ENCODE measurements at regions of chr14 and their contacts with region 1.

Region 1: GRCh38 chr14:75258615-75259466 is 19.8 kb upstream of the FOS start:
- DNase-seq: peak; percentile 98
- ATAC-seq: peak; percentile 97
- H3K4me3 Mint-ChIP-seq: peak overlapping the region; percentile 97
- H3K27ac Mint-ChIP-seq: peak overlapping the region; percentile 98
- H3K4me1 Mint-ChIP-seq: peaks cover 11% of the 10 kb centered on the region
- H3K27me3 Mint-ChIP-seq: peaks cover 50% of the 10 kb centered on the region

Region 2: GRCh38 chr14:75176142-75176820 is 82.6 kb before region 1 on chr14 and contains the start of gene TMED10:
- POLR2A ChIA-PET with region 1: interaction called, 10 read pairs
- DNase-seq: peak; percentile 91
- ATAC-seq: peak; percentile 77
- H3K4me3 Mint-ChIP-seq: peak within 1 kb of the TSS; percentile 95
- H3K27ac Mint-ChIP-seq: peak within 1 kb of the TSS; percentile 98
- H3K4me1 Mint-ChIP-seq: peaks cover 23% of the 10 kb centered on the region
- H3K27me3 Mint-ChIP-seq: peaks cover 1% of the 10 kb centered on the region
- total RNA-seq, gene TMED10: 149 to 154 TPM

Region 3: GRCh38 chr14:75205591-75205990 is 53.2 kb before region 1 on chr14:
- POLR2A ChIA-PET with region 1: no interaction called
- DNase-seq: no peak
- ATAC-seq: peak; percentile 79
- H3K4me3 Mint-ChIP-seq: peak overlapping the region; percentile 28
- H3K27ac Mint-ChIP-seq: peak overlapping the region; percentile 82
- H3K4me1 Mint-ChIP-seq: peaks cover 24% of the 10 kb centered on the region
- H3K27me3 Mint-ChIP-seq: no peaks in the 10 kb centered on the region

Region 4: GRCh38 chr14:75230140-75231045 is 28.4 kb before region 1 on chr14:
- POLR2A ChIA-PET with region 1: interaction called, 12 read pairs
- DNase-seq: no peak
- ATAC-seq: peak; percentile 74
- H3K4me3 Mint-ChIP-seq: peak overlapping the region; percentile 69
- H3K27ac Mint-ChIP-seq: peak overlapping the region; percentile 92
- H3K4me1 Mint-ChIP-seq: peaks cover 48% of the 10 kb centered on the region
- H3K27me3 Mint-ChIP-seq: peaks cover 4% of the 10 kb centered on the region

Region 5: GRCh38 chr14:75277000-75277801 is 18.4 kb after region 1 on chr14:
- POLR2A ChIA-PET with region 1: interaction called, 20 read pairs
- DNase-seq: peak; percentile 75
- ATAC-seq: peak; percentile 3
- H3K4me3 Mint-ChIP-seq: peak overlapping the region; percentile 88
- H3K27ac Mint-ChIP-seq: peak overlapping the region; percentile 76
- H3K4me1 Mint-ChIP-seq: peaks cover 31% of the 10 kb centered on the region
- H3K27me3 Mint-ChIP-seq: peaks cover 72% of the 10 kb centered on the region

Region 6: DNA sequence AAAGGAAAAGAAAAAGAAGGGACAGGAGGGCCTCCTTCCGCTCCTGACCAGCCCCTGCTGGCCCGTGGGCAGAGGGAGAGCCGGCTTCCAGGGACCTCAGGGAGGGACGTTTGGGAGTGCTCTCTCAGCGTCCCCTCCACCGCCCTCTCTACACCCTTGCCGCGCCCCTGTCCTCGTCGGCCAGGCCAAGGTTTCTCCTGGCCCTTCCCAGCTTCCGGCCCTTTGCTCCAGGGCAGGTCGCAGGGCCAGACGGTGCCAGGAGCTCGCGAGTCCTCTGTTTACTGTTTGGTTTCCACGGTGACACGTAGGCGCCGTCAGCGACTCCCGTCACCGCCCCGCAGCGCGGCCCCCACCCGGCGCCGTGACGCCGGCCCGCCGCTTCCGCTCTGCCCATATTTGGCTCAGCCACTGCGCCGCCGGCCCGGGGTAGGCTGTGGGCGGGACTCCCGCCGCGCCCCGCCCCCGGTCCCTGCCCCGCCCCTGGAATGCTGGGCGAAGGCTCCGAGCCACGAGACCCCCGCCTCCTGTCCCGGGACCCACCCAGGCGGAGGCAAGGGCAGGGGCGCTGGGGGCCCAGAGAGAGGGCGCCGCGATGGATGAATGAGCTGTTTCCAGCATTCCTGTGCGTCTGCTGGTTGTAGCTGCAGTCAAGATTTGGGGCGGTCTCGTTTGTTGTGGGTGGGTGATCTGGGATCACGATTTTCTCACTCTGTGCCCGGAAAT is 35.2 kb after region 1 on chr14:
- POLR2A ChIA-PET with region 1: interaction called, 20 read pairs
- DNase-seq: peak; percentile 97
- ATAC-seq: peak; percentile 85
- H3K4me3 Mint-ChIP-seq: peak overlapping the region; percentile 88
- H3K27ac Mint-ChIP-seq: peak overlapping the region; percentile 82
- H3K4me1 Mint-ChIP-seq: peaks cover 12% of the 10 kb centered on the region
- H3K27me3 Mint-ChIP-seq: peaks cover 18% of the 10 kb centered on the region